ENCODE measurements at regions of chr4 and their contacts with region 1.

Region 1: GRCh38 chr4:88284439-88285234 is at the start of gene PPM1K:
- DNase-seq: peak; percentile 98 to 99
- H3K4me3 ChIP-seq: peak within 1 kb of the TSS; percentile 79
- H3K4me3 Mint-ChIP-seq: peak within 1 kb of the TSS; percentile 94
- H3K27ac Mint-ChIP-seq: peak within 1 kb of the TSS; percentile 95
- H3K4me1 ChIP-seq: peaks cover 30% of the 10 kb centered on the region
- H3K4me1 Mint-ChIP-seq: peaks cover 14% of the 10 kb centered on the region
- H3K27me3 ChIP-seq: no peaks in the 10 kb centered on the region
- H3K27me3 Mint-ChIP-seq: no peaks in the 10 kb centered on the region
- CTCF ChIP-seq: no peak
- total RNA-seq, gene PPM1K: 23.8 and 24.3 TPM in 2 replicates

Region 2: DNA sequence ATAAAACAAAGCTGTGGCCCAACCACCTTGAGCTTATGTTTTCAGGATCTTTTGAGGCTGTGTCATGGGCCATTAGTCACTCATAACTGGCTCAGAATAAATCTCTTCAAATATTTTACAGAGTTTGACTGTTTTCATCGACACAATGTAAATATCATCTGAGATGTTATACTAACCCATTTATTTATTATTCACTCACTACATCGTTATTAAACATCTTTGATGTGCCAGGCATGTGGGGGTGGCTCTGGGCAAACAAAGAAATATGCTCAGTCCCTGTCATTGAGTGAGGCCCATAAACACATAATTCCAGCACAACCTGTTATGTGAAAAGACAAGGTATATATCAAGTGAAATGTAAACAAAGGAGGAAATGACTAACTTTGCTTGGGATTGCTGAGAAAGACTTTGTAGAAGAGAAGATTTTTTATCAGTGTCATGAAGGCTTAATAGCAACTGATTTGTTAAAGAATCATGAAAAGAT is 34.3 kb after region 1 on chr4:
- CTCF ChIA-PET with region 1: interaction called, 4 read pairs
- POLR2A ChIA-PET with region 1: interaction called, 8 read pairs
- intact Hi-C with region 1: loop called (anchors 2 kb)
- DNase-seq: peak in 1 of 2 experiments; percentile 32
- H3K4me3 ChIP-seq: no peak overlapping the region
- H3K4me3 Mint-ChIP-seq: peak overlapping the region; percentile 49
- H3K27ac Mint-ChIP-seq: peak overlapping the region; percentile 86
- H3K4me1 ChIP-seq: peaks cover 36% of the 10 kb centered on the region
- H3K4me1 Mint-ChIP-seq: peaks cover 19% of the 10 kb centered on the region
- H3K27me3 ChIP-seq: no peaks in the 10 kb centered on the region
- H3K27me3 Mint-ChIP-seq: no peaks in the 10 kb centered on the region
- CTCF ChIP-seq: no peak

Region 3: DNA sequence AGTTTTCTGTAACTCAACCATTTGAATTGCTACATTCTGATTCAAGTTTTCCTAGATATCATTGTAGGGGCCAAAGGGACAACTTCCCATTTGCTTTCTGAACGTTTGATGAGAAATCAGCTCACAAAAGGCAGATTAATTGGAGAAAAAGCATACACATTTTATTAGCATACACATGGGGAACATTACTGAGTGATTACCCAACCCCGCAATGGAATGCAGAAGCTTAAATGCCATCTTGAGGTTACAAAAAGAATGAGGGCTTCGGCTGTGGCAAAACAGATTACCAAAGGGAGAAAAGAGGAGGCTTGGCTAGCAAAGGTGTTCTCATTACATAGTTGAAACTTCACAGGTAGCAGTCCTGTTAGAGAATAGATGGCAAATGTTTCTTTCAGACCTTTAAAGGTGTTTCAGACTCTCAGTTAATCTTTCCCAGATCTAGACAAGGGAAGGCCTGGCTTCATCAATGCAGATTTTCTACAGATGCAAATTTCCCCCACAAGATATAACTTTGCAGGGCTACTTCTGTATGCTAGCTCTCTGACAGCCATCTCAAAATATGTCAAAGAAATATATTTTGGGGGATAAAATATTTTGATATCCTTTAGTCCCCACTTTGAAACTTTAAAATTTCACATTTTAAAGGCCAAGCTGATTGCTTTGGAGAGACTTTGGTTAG is 67.6 kb after region 1 on chr4:
- CTCF ChIA-PET with region 1: no interaction called
- POLR2A ChIA-PET with region 1: no interaction called
- intact Hi-C with region 1: loop called (anchors 2 kb)
- DNase-seq: peak in 1 of 2 experiments; percentile 19
- H3K4me3 ChIP-seq: no peak overlapping the region
- H3K4me3 Mint-ChIP-seq: no peak overlapping the region
- H3K27ac Mint-ChIP-seq: peak overlapping the region; percentile 43
- H3K4me1 ChIP-seq: peaks cover 10% of the 10 kb centered on the region
- H3K4me1 Mint-ChIP-seq: peaks cover 7% of the 10 kb centered on the region
- H3K27me3 ChIP-seq: no peaks in the 10 kb centered on the region
- H3K27me3 Mint-ChIP-seq: no peaks in the 10 kb centered on the region
- CTCF ChIP-seq: no peak

Region 4: DNA sequence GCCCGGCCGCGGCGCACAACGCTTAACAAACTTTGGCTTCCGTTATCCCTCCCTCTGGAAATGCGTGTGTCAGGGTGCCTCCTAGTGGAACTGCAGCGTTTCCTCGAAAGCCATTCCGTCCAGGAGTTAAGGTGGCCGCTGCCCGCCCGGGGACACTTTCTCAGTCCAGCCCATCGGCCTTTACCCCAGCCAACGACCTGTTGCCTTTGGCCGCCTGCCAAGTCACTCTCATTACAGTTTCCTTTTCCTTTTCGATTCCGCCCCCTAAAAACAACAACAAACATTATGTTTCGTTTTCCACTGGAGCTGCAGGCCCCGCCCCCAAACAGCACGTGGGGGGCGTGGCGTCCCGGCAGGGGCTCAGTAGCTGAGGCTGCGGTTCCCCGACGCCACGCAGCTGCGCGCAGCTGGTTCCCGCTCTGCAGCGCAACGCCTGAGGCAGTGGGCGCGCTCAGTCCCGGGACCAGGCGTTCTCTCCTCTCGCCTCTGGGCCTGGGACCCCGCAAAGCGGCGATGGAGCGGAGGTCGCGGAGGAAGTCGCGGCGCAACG is 172.2 kb after region 1 on chr4 and contains the start of gene HERC5:
- CTCF ChIA-PET with region 1: no interaction called
- POLR2A ChIA-PET with region 1: no interaction called
- intact Hi-C with region 1: loop called (anchors 2 kb)
- DNase-seq: peak; percentile 88 to 90
- H3K4me3 ChIP-seq: peak within 1 kb of the TSS; percentile 50
- H3K4me3 Mint-ChIP-seq: peak within 1 kb of the TSS; percentile 87
- H3K27ac Mint-ChIP-seq: peak within 1 kb of the TSS; percentile 81
- H3K4me1 ChIP-seq: no peaks in the 10 kb centered on the region
- H3K4me1 Mint-ChIP-seq: no peaks in the 10 kb centered on the region
- H3K27me3 ChIP-seq: no peaks in the 10 kb centered on the region
- H3K27me3 Mint-ChIP-seq: peaks cover 3% of the 10 kb centered on the region
- CTCF ChIP-seq: peak; percentile 54 to 80
- total RNA-seq, gene HERC5: 5.6 and 6.8 TPM in 2 replicates

Region 5: GRCh38 chr4:88523325-88524129 is 238.9 kb after region 1 on chr4 and contains the start of gene PYURF:
- CTCF ChIA-PET with region 1: no interaction called
- POLR2A ChIA-PET with region 1: no interaction called
- intact Hi-C with region 1: loop called (anchors 2 kb)
- DNase-seq: peak; percentile 93 to 95
- H3K4me3 ChIP-seq: peak within 1 kb of the TSS; percentile 56
- H3K4me3 Mint-ChIP-seq: peak within 1 kb of the TSS; percentile 93
- H3K27ac Mint-ChIP-seq: peak within 1 kb of the TSS; percentile 91
- H3K4me1 ChIP-seq: peaks cover 7% of the 10 kb centered on the region; the same call in 1 of the 2 replicates
- H3K4me1 Mint-ChIP-seq: peaks cover 7% of the 10 kb centered on the region
- H3K27me3 ChIP-seq: no peaks in the 10 kb centered on the region
- H3K27me3 Mint-ChIP-seq: no peaks in the 10 kb centered on the region
- CTCF ChIP-seq: no peak
- total RNA-seq, gene PYURF: 41.6 and 46.6 TPM in 2 replicates

Measured in Caco-2 (cell line).